Activated CD4-positive, alpha-beta T cell treated with anti-CD3 and anti-CD28 coated beads for 36 hours (primary cell): ENCODE measurements at regions of chr14 and their contacts with region 1.

Region 1: DNA sequence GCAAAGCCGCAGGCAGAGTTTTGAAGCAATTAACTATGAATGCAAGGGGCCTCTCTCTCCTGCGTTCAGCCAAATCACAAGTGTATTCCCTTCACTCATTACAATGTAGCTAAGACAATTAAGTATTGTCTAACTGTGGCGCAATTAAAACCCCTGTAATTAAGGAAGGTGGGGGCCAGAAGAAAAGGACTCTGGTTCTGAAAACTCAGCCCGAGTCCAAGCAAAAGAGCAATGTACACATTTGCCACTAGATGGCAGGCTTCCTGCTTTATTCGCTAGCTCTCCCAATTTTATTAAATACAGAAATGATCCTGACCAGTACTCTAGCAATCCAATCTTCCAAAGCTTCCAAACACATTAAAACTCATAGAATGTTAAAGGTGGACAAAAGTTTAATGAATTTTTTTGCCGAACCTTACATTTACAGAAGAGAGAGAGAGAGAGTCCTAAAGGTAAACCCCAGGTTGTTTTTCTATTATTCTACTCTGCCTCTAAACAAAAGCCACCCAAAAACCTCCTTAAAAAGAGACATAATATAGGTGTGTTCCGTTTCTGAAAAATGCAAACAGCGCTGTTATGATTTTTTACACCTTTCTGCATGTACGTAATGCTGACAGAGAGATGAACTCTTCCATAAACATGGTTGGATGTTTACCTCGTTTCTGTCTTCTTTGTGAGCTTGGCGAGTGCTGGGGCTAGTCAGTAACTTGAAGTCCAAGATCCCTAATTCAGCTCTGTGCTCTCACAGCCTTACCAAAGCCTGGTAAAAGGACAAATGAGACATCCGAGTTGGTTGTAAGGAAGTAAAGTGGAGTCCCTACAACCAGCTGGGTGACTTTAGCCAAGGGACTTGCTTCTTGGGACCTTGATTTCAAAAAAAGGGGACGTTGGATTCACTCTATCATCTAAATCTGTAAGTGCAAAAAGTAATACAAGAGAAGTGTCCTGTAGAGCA is 50.9 kb upstream of the VASH1 start:
- DNase-seq: peak; percentile 51
- ATAC-seq: peak; percentile 49
- H3K4me3 Mint-ChIP-seq: no peak overlapping the region
- H3K27ac Mint-ChIP-seq: no peak overlapping the region
- H3K4me1 Mint-ChIP-seq: no peaks in the 10 kb centered on the region
- H3K27me3 Mint-ChIP-seq: peaks cover 7% of the 10 kb centered on the region

Region 2: GRCh38 chr14:76697246-76697905 is 13.0 kb before region 1 on chr14:
- CTCF ChIA-PET with region 1: interaction called, 10 read pairs
- POLR2A ChIA-PET with region 1: no interaction called
- intact Hi-C with region 1: no loop called
- DNase-seq: no peak
- ATAC-seq: no peak
- H3K4me3 Mint-ChIP-seq: no peak overlapping the region
- H3K27ac Mint-ChIP-seq: no peak overlapping the region
- H3K4me1 Mint-ChIP-seq: no peaks in the 10 kb centered on the region
- H3K27me3 Mint-ChIP-seq: no peaks in the 10 kb centered on the region

Region 3: DNA sequence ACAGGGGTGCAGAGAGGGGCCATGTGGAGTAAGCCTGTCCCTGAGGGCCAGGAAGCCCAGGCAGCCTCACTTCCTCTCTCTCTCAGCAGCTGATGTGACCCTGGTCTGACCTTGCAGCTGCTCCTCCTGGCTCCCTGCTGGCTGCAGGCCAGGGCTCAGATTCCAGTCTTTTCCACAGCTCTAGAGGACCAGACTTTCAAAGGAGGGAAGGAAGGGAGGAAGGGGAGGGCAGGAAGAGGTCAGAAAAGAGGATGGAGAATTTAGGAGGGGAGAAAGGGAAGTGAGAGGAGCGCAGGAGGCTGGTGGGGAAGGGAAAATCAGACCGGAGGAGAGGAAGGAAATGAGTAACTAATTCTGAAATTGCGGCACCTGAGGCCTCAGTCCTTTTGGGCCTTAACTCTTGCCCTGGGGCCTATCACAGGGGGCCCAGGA is 10.1 kb after region 1 on chr14:
- CTCF ChIA-PET with region 1: interaction called, 21 read pairs
- POLR2A ChIA-PET with region 1: no interaction called
- intact Hi-C with region 1: no loop called
- DNase-seq: no peak
- ATAC-seq: peak; percentile 44
- H3K4me3 Mint-ChIP-seq: no peak overlapping the region
- H3K27ac Mint-ChIP-seq: no peak overlapping the region
- H3K4me1 Mint-ChIP-seq: peaks cover 8% of the 10 kb centered on the region
- H3K27me3 Mint-ChIP-seq: peaks cover 7% of the 10 kb centered on the region

Region 4: DNA sequence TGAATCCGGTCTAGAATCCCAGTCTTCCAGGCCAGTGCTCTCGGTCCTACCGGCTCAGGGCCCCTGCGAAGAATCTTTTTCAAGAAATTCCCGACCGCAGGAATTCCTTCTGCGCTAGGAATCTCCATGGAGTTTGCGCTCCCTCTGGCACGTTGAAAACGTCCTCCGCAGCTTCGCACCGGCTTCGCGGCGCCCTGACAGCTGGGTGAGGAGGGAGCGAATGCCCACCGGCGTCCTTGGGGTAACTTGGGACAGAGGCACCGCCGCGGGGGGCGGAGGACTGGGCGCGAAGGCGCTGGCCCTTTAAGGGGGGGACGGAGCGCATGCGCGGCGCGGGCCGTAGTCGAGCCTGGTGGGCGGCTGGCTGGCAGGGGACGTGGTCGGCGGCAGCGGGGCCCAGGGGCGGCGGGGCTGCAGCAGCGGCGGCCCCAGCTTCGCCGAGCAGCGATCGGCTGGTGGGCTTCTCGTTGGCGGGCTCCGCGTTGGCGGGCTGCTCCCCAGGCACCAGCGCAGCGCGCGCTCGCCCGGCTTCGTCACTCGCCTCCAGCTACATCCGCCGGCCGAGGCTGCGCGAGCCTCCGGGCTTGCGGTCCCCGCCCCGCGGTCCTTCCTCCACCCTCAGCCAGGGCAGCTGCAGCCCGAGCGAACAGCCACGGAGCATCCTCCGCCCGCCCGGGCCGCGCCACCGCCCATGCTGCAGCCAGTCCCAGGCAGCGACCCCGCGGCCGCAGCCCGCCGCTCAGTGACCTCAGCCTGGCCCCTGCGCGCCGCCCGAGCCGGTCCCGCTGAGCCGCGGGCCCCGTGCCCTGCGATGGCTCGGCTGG is 51.0 kb after region 1 on chr14 and contains the start of gene VASH1:
- CTCF ChIA-PET with region 1: interaction called, 24 read pairs
- POLR2A ChIA-PET with region 1: no interaction called
- intact Hi-C with region 1: loop called (anchors 2 to 5 kb)
- DNase-seq: peak; percentile 78
- ATAC-seq: peak; percentile 89
- H3K4me3 Mint-ChIP-seq: peak within 1 kb of the TSS; percentile 73
- H3K27ac Mint-ChIP-seq: peak within 1 kb of the TSS; percentile 11
- H3K4me1 Mint-ChIP-seq: peaks cover 8% of the 10 kb centered on the region
- H3K27me3 Mint-ChIP-seq: peaks cover 27% of the 10 kb centered on the region
- total RNA-seq, gene VASH1: 4.0 to 5.3 TPM

Region 5: DNA sequence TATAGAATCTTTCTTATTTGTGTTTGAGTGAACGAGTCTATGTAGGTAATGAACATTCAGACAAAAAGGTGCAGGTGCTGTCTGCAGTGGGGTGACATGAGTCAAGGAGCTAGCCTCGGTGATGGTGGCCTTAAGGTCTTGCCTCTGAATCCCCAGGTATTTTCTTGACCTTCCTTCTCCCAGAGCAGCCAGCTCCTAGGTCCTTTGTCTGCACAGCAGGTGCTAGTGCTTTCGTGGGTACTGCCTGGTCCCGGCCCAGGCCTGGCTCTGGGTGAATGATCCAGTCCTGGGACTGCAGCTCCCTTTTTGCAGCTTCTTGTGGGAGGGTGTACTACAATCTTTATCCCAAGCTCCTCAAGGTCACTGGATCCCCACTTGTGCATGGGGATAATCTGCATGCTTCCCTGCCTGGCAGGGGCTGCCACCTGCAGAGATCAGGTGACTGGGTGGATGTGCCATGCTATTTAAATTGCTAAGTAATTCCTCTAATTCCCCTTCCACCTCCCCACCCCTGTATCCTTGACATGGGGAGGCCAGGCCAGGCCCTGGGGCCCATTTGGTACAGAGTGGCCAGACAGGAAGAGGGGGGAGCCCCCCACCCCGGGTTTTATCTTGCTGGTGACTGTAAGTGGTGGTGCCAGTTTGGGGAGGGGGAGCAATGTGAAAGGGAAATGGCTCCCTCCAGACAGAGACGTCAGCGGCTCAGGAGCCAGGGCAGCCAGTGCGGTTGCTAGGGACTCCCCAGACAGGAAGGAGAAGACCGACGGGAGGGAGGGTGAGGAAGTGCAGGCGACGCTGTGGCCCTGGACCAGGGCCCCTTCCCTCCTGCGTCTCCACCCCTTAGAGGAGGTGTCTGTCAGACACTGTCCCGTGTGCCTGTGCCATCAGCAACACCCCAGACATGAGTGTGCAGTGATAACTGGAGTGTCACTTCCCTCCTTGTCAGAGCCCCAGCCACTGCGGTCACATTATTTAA is 57.6 kb after region 1 on chr14:
- CTCF ChIA-PET with region 1: interaction called, 5 read pairs
- POLR2A ChIA-PET with region 1: no interaction called
- intact Hi-C with region 1: loop called in 1 of 2 experiments (anchors 5 kb)
- DNase-seq: peak; percentile 86
- ATAC-seq: peak; percentile 100
- H3K4me3 Mint-ChIP-seq: peak overlapping the region; percentile 23
- H3K27ac Mint-ChIP-seq: peak overlapping the region; percentile 80
- H3K4me1 Mint-ChIP-seq: peaks cover 17% of the 10 kb centered on the region
- H3K27me3 Mint-ChIP-seq: peaks cover 2% of the 10 kb centered on the region

Region 6: DNA sequence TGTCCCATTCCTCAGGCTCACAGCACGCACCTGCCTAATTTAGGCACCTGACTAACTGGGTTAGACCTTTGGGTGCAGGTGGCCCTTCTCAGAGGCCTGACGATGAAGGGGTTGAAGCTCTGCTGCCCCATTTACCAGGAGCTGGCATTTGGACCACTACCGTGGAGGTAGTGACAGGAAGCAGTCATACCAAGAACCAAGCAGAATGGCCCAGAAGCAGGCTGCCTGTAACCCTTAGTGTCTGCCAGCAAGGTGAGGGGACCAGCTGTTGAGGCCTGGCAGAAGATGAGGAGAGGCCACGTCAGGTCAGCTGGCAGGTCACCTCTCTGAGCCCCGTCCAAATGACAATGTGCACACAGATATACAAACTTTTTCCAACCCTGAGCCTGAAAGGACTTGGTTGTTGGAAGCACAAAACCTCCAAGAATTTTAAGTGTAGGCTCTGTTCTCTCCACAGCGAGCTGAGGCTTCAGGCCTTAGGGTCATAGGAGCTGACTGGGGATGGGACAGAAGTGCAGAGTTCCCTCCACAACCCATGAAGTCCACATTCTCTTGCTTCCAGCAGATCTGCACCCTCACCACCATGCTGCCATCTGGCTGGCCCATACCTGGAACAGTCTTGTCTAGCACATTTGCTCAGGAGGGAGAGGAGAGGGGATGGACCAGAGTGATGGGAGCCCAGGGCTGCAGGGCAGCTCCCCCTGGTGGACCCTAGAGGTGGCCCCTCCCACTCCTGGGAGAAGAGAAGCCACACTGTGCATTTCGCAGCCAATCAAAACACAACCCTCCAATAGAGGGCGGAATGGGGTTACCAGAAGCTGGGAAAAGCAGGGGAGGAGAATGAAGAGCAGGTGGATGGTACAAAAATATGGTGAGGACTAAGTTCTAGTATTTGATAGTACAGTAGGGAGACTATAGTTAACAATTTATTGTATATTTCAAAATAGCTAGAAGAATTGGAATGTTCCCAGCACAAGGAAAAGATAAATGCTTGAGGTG is 74.2 kb after region 1 on chr14:
- CTCF ChIA-PET with region 1: interaction called, 88 read pairs
- POLR2A ChIA-PET with region 1: no interaction called
- intact Hi-C with region 1: loop called (anchors 1 kb)
- DNase-seq: peak; percentile 81
- ATAC-seq: peak; percentile 85
- H3K4me3 Mint-ChIP-seq: no peak overlapping the region
- H3K27ac Mint-ChIP-seq: no peak overlapping the region
- H3K4me1 Mint-ChIP-seq: peaks cover 32% of the 10 kb centered on the region
- H3K27me3 Mint-ChIP-seq: no peaks in the 10 kb centered on the region